ENCODE measurements at regions of chr19 and their contacts with region 1.

Region 1: DNA sequence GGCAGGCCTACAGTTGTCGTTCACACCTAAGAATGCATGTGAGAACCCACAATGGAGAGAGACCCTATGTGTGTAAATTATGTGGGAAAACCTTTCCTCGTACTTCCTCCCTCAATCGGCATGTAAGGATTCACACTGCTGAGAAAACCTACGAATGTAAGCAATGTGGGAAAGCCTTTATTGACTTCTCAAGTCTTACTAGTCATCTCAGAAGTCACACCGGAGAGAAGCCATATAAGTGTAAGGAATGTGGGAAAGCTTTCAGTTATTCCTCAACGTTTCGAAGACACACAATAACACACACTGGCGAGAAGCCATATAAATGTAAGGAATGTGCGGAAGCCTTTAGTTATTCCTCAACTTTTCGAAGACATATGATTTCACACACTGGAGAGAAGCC is 11.3 kb downstream of the ZNF555 start:
- DNase-seq: no peak
- ATAC-seq: no peak
- H3K4me3 Mint-ChIP-seq: no peak overlapping the region
- H3K27ac Mint-ChIP-seq: no peak overlapping the region
- H3K4me1 Mint-ChIP-seq: peaks cover 29% of the 10 kb centered on the region
- H3K27me3 Mint-ChIP-seq: no peaks in the 10 kb centered on the region

Region 2: DNA sequence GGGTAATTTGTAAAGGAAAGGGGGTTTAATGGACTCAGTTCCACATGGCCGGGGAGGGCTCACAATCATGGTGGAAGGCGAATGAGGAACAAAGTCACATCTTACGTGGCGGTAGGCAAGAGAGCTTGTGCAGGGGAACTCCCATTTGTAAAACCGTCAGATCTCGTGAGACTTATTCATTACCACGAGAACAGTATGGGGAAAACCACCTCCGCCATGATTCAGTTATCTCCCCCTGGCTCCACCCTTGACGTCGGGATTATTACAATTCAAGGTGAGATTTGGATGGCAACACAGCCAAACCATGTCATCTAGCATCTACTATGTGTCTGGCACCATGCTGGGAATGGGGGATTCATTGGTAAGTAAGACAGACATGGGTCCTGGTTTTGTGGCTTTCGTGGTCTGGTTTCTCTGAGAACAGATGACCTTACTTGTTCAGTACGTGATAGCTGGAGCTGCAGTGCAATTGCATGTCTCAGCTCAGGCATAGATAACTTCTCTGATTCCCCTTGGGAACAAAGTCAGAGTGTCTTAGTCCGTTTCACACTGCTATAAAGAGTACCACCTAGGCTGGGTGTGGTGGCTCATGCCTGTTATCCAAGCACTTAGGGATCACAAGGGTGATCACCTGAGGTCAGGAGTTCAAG is 24.6 kb before region 1 on chr19:
- CTCF ChIA-PET with region 1: no interaction called
- POLR2A ChIA-PET with region 1: interaction called, 6 read pairs
- intact Hi-C with region 1: loop called in 1 of 2 experiments (anchors 2 kb)
- DNase-seq: no peak
- ATAC-seq: no peak
- H3K4me3 Mint-ChIP-seq: no peak overlapping the region
- H3K27ac Mint-ChIP-seq: no peak overlapping the region
- H3K4me1 Mint-ChIP-seq: no peaks in the 10 kb centered on the region
- H3K27me3 Mint-ChIP-seq: no peaks in the 10 kb centered on the region

Region 3: GRCh38 chr19:2992958-2993357 is 140.4 kb after region 1 on chr19:
- CTCF ChIA-PET with region 1: no interaction called
- POLR2A ChIA-PET with region 1: no interaction called
- intact Hi-C with region 1: no loop called
- DNase-seq: no peak
- ATAC-seq: no peak
- H3K4me3 Mint-ChIP-seq: no peak overlapping the region
- H3K27ac Mint-ChIP-seq: no peak overlapping the region
- H3K4me1 Mint-ChIP-seq: no peaks in the 10 kb centered on the region
- H3K27me3 Mint-ChIP-seq: no peaks in the 10 kb centered on the region